ENCODE measurements at regions of chr20 and their contacts with region 1.

Region 1: GRCh38 chr20:44683263-44684046 is 31.7 kb upstream of the CCN5 start:
- DNase-seq: peak; percentile 70 to 83
- H3K4me3 ChIP-seq: no peak overlapping the region
- H3K27ac ChIP-seq: no peak overlapping the region
- H3K4me1 ChIP-seq: peaks cover 0 to 2% (median 0%) of the 10 kb centered on the region in 4 experiments; a peak in 1 of 7 replicates
- H3K27me3 ChIP-seq: peaks cover 0 to 2% (median 0%) of the 10 kb centered on the region in 4 experiments; a peak in 2 of 7 replicates
- CTCF ChIP-seq: peak; percentile 61 to 86 (median 81)
- EP300 ChIP-seq: no peak
- POLR2A ChIP-seq: no peak
- RAD21 ChIP-seq: peak; percentile 75 to 83

Region 2: GRCh38 chr20:44598423-44599305 is 84.8 kb before region 1 on chr20:
- CTCF ChIA-PET with region 1: interaction called, 10 read pairs
- POLR2A ChIA-PET with region 1: no interaction called
- DNase-seq: no peak
- H3K4me3 ChIP-seq: no peak overlapping the region
- H3K27ac ChIP-seq: no peak overlapping the region
- H3K4me1 ChIP-seq: peaks cover 12 to 24% (median 17%) of the 10 kb centered on the region in 4 experiments
- H3K27me3 ChIP-seq: no peaks in the 10 kb centered on the region; a peak in 1 of 7 replicates
- CTCF ChIP-seq: peak in 1 of 3 experiments; percentile 20; a peak in 1 of 4 replicates
- EP300 ChIP-seq: no peak
- POLR2A ChIP-seq: no peak
- RAD21 ChIP-seq: no peak

Region 3: DNA sequence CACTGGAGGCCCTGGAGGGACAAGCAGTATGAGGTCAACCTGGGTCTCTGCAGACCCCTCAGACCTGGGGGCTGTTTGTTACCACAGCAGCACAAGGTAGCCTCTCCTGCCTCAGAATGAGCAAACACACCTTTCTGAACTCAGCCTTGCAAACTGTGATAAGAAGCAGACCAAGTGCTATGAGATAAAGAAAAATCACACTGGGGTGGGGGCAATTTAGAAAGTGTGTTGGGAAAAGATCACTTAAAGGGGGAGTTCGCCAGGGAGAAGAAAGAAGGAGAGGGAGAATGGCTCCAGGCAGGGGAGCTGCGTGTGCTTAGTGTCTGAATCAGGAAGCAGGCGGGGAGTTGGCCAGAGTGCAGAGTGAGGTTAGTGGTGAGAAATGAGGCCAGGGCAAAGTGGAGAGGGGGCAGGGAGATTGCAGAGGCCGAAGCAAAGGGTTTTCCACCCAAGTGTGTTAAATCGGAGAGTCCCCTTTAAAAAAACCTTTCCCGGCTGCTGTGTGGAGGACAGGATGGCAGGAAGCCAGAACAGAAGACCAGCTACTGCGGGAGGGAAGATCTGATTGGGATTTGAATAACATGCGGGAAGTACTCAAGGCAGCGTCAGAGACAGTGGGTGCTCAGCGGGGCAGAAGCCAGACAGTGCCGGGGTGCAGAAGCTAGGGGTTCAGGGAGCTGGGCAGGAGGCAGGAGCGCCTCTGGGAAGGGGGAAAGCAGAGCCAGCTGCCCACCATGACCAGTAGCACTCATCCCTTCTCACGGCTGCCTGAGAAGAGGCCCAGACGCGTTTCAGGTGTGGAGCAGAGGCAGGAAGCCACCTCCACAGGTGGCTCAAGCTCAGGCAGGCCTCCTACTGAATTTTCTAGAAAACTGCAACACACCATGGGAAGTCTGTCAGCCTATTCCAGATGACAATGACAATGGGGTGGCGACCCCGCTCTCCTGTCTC is 41.0 kb before region 1 on chr20:
- CTCF ChIA-PET with region 1: interaction called, 83 read pairs
- POLR2A ChIA-PET with region 1: interaction called, 6 read pairs
- DNase-seq: peak in 1 of 2 experiments; percentile 63
- H3K4me3 ChIP-seq: peak overlapping the region in 2 of 4 experiments; percentile 10 to 20; a peak in 2 of 8 replicates
- H3K27ac ChIP-seq: peak overlapping the region; percentile 85; the same call in 1 of the 2 replicates
- H3K4me1 ChIP-seq: peaks cover 8 to 34% (median 21%) of the 10 kb centered on the region in 4 experiments
- H3K27me3 ChIP-seq: no peaks in the 10 kb centered on the region
- CTCF ChIP-seq: peak; percentile 17 to 46 (median 22); a peak in 3 of 4 replicates
- EP300 ChIP-seq: no peak
- POLR2A ChIP-seq: peak; percentile 61 to 76
- RAD21 ChIP-seq: peak in 1 of 2 experiments; percentile 37; a peak in 1 of 4 replicates

Region 4: DNA sequence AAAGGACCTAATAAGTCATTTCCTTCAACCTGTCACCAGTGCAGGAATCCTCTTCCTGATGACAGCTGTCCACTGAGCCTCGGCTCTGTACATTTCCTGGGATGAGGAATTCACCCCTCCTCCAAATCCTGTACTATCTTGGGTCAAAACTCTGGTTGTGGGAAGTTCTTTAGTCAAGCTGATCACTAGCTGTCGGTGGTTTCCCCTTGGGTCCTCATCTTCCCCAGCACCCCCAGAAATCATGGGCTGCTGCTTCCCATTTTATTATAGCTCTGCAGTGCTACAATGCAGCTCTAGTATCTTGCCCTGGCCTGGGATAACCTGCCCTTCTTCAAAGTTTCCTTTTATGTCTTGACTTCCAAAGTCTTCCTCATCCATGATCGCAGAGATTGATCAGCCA is 17.4 kb before region 1 on chr20:
- CTCF ChIA-PET with region 1: interaction called, 12 read pairs
- POLR2A ChIA-PET with region 1: no interaction called
- DNase-seq: no peak
- H3K4me3 ChIP-seq: no peak overlapping the region
- H3K27ac ChIP-seq: no peak overlapping the region
- H3K4me1 ChIP-seq: 0 out of 7 replicates have a peak, but pooled peaks cover 0 to 3% (median 0%) of the 10 kb centered on the region in 4 experiments
- H3K27me3 ChIP-seq: no peaks in the 10 kb centered on the region; a peak in 1 of 7 replicates
- CTCF ChIP-seq: no peak
- EP300 ChIP-seq: no peak
- POLR2A ChIP-seq: no peak
- RAD21 ChIP-seq: no peak

Region 5: GRCh38 chr20:44714696-44715482 is 31.4 kb after region 1 on chr20 and contains the start of gene CCN5:
- CTCF ChIA-PET with region 1: interaction called, 67 read pairs
- POLR2A ChIA-PET with region 1: no interaction called
- DNase-seq: no peak
- H3K4me3 ChIP-seq: no peak within 1 kb of the TSS
- H3K27ac ChIP-seq: no peak within 1 kb of the TSS
- H3K4me1 ChIP-seq: peaks cover 0 to 3% (median 0%) of the 10 kb centered on the region in 4 experiments; a peak in 1 of 7 replicates
- H3K27me3 ChIP-seq: no peaks in the 10 kb centered on the region
- CTCF ChIP-seq: no peak
- EP300 ChIP-seq: no peak
- POLR2A ChIP-seq: no peak
- RAD21 ChIP-seq: no peak
- total RNA-seq, gene CCN5: not detected in 2 replicates

Region 6: GRCh38 chr20:44738813-44739477 is 55.5 kb after region 1 on chr20:
- CTCF ChIA-PET with region 1: interaction called, 146 read pairs
- POLR2A ChIA-PET with region 1: interaction called, 12 read pairs
- DNase-seq: peak in 1 of 2 experiments; percentile 75
- H3K4me3 ChIP-seq: peak overlapping the region in 1 of 4 experiments; percentile 12; a peak in 1 of 8 replicates
- H3K27ac ChIP-seq: no peak overlapping the region
- H3K4me1 ChIP-seq: peaks cover 0 to 2% (median 0%) of the 10 kb centered on the region in 4 experiments; a peak in 1 of 7 replicates
- H3K27me3 ChIP-seq: peaks cover 0 to 9% (median 4%) of the 10 kb centered on the region in 4 experiments; a peak in 5 of 7 replicates
- CTCF ChIP-seq: no peak
- EP300 ChIP-seq: no peak
- POLR2A ChIP-seq: no peak
- RAD21 ChIP-seq: no peak